ENCODE measurements at regions of chr1 and their contacts with region 1.

Region 1: DNA sequence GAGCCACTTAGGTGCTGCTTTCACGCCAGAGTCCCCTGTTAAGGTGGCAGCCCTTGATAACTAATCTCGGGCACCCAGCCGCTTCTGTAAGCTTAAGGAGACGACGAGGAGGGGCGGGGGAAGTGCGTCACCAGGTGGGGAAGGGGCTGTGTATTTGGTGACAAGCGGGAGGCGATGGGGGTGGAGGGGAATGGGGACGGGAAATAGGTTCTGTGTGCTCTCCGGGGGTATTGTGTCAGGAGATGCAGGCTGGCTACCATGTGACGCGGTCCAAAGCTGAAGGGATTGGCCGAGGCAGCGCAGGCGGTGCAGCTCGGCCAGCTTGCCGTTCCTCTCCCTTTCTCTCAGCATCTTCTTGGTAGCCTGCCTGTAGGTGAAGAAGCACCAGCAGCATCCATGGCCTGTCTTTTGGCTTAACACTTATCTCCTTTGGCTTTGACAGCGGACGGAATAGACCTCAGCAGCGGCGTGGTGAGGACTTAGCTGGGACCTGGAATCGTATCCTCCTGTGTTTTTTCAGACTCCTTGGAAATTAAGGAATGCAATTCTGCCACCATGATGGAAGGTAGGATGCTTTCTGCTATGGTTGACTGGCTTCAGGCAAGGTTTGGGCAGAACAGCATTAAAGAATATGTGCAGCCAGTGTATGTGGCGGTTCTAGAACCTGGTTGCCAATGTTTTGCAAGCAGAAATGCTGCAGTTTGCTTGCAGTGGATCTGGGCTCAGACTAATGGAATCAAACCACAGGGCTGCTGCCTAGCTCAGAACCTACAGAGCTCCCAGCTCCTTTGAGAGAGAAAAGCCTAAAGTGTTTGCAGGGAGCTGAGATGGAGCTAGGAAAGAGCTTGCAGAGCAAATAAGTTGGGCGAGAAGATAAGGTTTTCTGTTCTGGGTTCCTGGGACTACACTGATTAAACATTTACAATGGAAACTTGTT is at the start of gene SGIP1:
- DNase-seq: peak; percentile 13
- ATAC-seq: no peak
- H3K4me3 ChIP-seq: peak within 1 kb of the TSS in 4 of 5 experiments; percentile 27 to 64 (median 38)
- H3K4me3 Mint-ChIP-seq: peak within 1 kb of the TSS; percentile 84
- H3K27ac ChIP-seq: no peak within 1 kb of the TSS
- H3K27ac Mint-ChIP-seq: no peak within 1 kb of the TSS
- H3K4me1 ChIP-seq: peaks cover 14 to 15% of the 10 kb centered on the region in 2 donors
- H3K4me1 Mint-ChIP-seq: peaks cover 22% of the 10 kb centered on the region
- H3K27me3 ChIP-seq: peaks cover 0 to 20% (median 12%) of the 10 kb centered on the region in 4 experiments
- H3K27me3 Mint-ChIP-seq: peaks cover 47% of the 10 kb centered on the region
- CTCF ChIP-seq: no peak
- total RNA-seq, gene SGIP1: not detected in 2 replicates

Region 2: DNA sequence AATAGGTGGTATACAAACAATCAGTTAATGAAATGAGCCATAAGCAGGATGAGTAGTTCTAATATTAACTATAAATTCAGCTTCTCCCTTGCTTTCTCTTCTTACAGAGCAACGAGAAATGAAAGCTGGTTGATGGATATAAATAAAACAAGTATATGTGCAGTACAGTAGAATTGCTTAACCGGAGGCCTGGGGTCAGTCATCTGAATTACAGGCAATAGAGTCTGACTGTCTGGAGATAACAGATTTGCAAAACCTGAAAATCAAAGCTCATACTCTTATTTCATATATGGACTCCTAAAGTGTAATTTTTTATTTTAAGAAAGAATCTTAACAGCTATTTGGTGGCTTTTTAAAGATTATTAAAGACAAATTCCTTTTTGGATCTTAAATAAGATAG is 43.3 kb before region 1 on chr1:
- CTCF ChIA-PET with region 1: no interaction called
- POLR2A ChIA-PET with region 1: interaction called, 10 read pairs
- intact Hi-C with region 1: no loop called
- DNase-seq: peak; percentile 22
- ATAC-seq: no peak
- H3K4me3 ChIP-seq: no peak overlapping the region
- H3K4me3 Mint-ChIP-seq: no peak overlapping the region
- H3K27ac ChIP-seq: peak overlapping the region in 1 of 2 donors; percentile 68
- H3K27ac Mint-ChIP-seq: no peak overlapping the region
- H3K4me1 ChIP-seq: peaks cover 4 to 9% of the 10 kb centered on the region in 2 donors
- H3K4me1 Mint-ChIP-seq: peaks cover 12% of the 10 kb centered on the region
- H3K27me3 ChIP-seq: no peaks in the 10 kb centered on the region
- H3K27me3 Mint-ChIP-seq: peaks cover under 1% of the 10 kb centered on the region
- CTCF ChIP-seq: no peak

Region 3: DNA sequence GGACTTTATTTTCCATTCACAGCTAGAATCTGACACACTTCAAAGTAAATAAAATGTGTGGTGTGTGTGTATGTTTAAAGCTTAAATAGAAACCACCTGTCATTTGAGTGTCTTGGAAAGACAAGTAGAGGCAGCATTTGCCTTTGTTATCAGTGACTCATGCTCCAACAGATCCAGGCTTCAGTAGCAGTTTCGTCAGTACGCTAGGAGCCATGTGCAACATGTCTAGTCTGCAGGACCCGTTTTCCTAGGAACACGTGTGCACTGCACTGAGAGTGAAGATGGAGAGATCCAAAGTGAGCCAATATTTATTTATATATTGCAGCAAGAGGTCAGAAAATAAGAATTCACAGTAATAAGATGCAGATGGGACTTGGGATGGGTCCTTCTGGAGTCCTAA is 41.7 kb after region 1 on chr1:
- CTCF ChIA-PET with region 1: no interaction called
- POLR2A ChIA-PET with region 1: no interaction called
- intact Hi-C with region 1: no loop called
- DNase-seq: no peak
- ATAC-seq: no peak
- H3K4me3 ChIP-seq: no peak overlapping the region
- H3K4me3 Mint-ChIP-seq: no peak overlapping the region
- H3K27ac ChIP-seq: no peak overlapping the region
- H3K27ac Mint-ChIP-seq: no peak overlapping the region
- H3K4me1 ChIP-seq: no peaks in the 10 kb centered on the region
- H3K4me1 Mint-ChIP-seq: peaks cover 1% of the 10 kb centered on the region
- H3K27me3 ChIP-seq: no peaks in the 10 kb centered on the region
- H3K27me3 Mint-ChIP-seq: peaks cover 15% of the 10 kb centered on the region
- CTCF ChIP-seq: no peak

Measured in B cell (primary cell).